Transverse colon (tissue), 4 donors: ENCODE measurements at regions of chr4 and their contacts with region 1.

Region 1: DNA sequence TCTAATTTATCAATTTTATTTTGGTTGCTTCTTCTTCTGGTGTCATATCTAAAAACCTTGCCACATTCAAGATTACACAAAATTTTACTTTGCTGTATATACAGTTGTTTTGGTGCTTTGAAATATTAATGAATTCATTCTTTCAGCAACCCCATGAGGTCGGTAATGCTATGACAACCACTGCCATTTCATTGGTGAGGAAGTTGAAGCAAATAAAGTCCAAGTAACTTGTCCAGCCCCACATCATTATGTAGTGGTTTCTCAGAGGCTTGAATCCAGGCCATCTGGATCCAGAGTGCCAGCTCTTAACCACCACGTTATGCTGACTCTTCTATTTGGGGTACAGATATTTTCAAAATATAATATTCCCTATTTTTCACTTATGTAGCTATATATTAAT is 42.2 kb downstream of the UGT2A3 start:
- DNase-seq: no peak
- H3K4me3 ChIP-seq: no peak overlapping the region
- H3K27ac ChIP-seq: no peak overlapping the region
- H3K4me1 ChIP-seq: peaks cover 4 to 15% (median 11%) of the 10 kb centered on the region in 4 donors
- H3K27me3 ChIP-seq: no peaks in the 10 kb centered on the region
- CTCF ChIP-seq: no peak
- EP300 ChIP-seq: no peak
- POLR2A ChIP-seq: no peak

Region 2: DNA sequence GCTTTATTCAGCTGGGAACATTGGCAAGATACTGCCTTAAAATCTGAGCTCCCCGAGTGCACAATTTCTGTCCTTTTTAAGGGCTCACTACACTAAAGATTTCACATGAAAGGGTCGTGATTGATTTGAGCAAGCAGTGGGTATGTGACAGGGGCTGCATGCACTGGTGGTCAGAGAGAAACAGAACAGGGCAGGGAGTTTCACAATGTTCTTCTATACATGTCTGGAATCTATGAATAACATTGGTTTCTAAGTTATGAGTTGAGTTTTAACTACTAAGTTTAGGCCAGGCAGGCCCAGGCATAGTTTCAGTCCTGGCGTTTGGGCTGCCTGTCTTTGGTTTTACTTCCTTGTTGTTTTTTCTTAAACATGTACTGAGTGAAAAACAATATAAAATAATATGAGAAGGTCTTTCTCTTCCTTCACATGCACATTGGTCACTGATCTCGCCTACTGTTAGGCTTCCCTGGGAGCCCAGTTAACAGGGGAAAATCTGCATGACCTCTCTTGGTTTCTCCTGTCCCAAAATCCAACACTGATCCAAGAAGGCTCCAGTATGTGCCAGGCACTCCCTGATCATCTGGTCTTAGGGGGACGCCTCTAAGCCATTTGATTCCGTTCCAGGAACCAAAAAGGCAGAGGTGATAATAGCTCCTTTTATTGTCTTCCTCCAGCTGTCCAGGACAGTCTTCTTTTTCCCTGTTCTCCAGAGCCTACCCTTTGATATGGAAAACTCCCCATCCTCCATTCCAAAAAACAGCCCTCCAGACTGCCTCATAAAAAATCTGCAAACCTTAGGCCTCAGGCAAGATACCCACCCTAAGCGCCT is 332.9 kb before region 1 on chr4 and contains the start of gene UGT2B17:
- in situ Hi-C with region 1: no loop called
- intact Hi-C with region 1: no loop called
- DNase-seq: no peak
- H3K4me3 ChIP-seq: no peak within 1 kb of the TSS
- H3K27ac ChIP-seq: no peak within 1 kb of the TSS
- H3K4me1 ChIP-seq: peaks cover 0 to 12% (median 0%) of the 10 kb centered on the region in 4 donors
- H3K27me3 ChIP-seq: no peaks in the 10 kb centered on the region
- CTCF ChIP-seq: no peak
- EP300 ChIP-seq: no peak
- POLR2A ChIP-seq: no peak
- total RNA-seq, gene UGT2B17: 171 to 1,753 (median 346) TPM in 3 of 4 donors, not detected in the other

Region 3: DNA sequence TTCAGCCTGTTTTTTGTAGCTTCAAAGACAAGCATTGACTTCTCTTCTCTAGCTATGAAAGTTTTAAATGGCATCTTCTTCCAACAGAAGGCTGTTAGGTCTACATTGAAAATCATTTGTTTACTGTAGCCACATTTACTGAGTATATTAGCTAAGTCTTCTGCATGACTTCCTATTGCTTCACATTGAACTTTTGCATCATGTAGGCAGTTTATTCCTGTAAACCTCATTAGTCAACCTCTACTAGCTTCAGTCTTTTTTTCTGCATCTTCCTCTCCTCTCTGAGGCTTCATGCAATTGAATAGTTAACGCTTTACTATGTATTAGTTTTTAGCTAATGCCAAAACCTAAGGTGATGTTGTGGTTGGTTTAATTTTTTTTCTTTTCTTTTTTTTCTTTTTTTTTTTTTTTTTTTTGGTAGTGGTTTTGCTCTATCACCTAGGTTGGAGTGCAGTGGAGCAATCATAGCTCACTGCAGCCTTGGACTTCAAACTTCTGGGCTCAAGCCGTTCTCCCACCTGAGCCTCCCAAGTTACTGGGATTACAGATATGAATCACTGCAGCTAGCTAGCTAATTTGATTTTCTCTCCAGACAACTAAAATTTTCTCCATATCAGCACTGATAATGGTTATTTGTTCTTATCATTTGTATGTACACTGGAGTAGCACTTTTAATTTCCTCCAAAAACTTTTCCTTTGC is 38.8 kb after region 1 on chr4:
- in situ Hi-C with region 1: no loop called
- intact Hi-C with region 1: loop called (anchors 2 kb)
- DNase-seq: no peak
- H3K4me3 ChIP-seq: peak overlapping the region in 3 of 4 donors; percentile 26 to 49 (median 32)
- H3K27ac ChIP-seq: peak overlapping the region; percentile 19 to 84 (median 79)
- H3K4me1 ChIP-seq: peaks cover 0 to 5% (median 0%) of the 10 kb centered on the region in 4 donors
- H3K27me3 ChIP-seq: no peaks in the 10 kb centered on the region
- CTCF ChIP-seq: no peak
- EP300 ChIP-seq: no peak
- POLR2A ChIP-seq: no peak